ENCODE measurements at regions of chr17 and their contacts with region 1.

Region 1: GRCh38 chr17:32461853-32462617 is 17.7 kb downstream of the PSMD11 start:
- DNase-seq: peak; percentile 43
- H3K4me3 Mint-ChIP-seq: no peak overlapping the region
- H3K27ac Mint-ChIP-seq: no peak overlapping the region
- H3K4me1 Mint-ChIP-seq: peaks cover 20% of the 10 kb centered on the region
- H3K27me3 Mint-ChIP-seq: no peaks in the 10 kb centered on the region

Region 2: DNA sequence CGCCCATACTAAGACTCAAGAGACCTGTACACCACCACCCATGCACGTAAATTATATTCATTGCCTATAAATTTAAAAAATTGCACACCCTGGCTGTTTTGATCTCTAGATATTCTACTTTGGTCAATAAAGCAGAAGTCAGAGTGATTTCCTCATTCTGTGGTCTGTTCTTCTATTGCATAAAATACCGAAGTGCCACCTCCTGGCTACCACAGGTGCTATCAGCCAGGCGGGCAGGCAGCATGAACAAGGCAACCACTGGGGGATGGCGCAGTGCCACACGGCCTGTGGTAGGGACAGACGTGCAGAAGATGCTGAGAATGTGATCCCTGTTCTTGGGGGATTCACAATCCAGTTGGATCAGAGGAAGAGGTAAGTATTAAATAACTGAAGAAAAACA is 147.1 kb after region 1 on chr17:
- intact Hi-C with region 1: loop called (anchors 1 kb)
- DNase-seq: peak; percentile 51
- H3K4me3 Mint-ChIP-seq: no peak overlapping the region
- H3K27ac Mint-ChIP-seq: no peak overlapping the region
- H3K4me1 Mint-ChIP-seq: peaks cover 8% of the 10 kb centered on the region
- H3K27me3 Mint-ChIP-seq: peaks cover 1% of the 10 kb centered on the region

Region 3: DNA sequence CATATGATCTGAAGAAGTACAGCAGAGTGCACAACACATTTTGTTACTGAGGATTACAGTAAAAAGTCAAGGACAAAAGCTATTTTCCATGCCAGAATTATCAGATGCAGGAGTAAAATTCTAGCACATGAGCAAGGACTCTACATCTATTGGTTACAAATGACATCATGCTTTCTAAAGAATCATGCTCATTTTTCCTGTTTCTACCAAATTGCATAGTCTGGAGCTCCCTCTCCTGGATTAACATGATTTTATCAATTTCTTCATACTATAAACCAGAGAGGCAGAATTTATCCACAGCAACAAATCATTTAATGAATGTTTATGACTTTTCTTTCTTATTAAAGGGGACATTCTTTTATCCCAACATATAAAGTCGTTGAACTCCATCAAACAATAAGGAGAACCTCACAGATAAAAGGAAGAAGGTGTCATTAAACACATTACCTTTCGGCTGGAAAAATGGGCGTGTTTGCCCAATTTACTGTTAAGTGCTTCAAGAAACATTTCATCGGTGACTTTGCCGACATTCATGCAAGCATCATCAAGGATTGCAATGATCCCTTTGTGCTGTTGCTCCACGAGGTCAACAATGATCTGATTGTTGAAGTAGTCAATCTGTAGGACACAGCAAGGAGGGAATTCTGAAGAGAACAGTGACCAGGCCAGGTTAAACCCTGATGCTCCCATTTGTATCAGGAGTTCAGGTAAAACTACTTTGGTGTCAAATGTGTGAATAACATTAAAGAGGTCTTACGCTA is 293.2 kb after region 1 on chr17:
- intact Hi-C with region 1: loop called (anchors 1 kb)
- DNase-seq: no peak
- H3K4me3 Mint-ChIP-seq: no peak overlapping the region
- H3K27ac Mint-ChIP-seq: no peak overlapping the region
- H3K4me1 Mint-ChIP-seq: peaks cover 23% of the 10 kb centered on the region
- H3K27me3 Mint-ChIP-seq: no peaks in the 10 kb centered on the region

Region 4: DNA sequence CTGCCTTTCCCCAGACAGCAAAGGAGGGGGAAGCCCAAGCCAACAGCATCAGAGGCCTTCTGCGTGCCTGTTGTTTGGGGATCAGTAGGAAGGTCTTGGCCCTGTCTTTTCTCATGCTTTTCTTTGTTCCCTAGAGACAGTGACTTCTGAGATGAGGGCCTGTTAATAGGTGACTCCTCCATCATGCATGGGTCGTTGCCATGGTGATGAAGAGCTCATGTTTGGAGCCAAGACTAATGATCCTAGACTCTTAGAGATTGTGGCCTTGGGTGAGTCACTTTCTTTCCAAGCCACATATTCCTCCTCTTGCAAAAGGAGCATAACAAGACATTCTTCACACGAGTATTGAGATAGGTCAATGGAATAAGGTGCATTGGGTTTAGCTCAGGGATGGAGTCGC is 1032.1 kb after region 1 on chr17:
- intact Hi-C with region 1: no loop called
- DNase-seq: no peak
- H3K4me3 Mint-ChIP-seq: no peak overlapping the region
- H3K27ac Mint-ChIP-seq: no peak overlapping the region
- H3K4me1 Mint-ChIP-seq: no peaks in the 10 kb centered on the region
- H3K27me3 Mint-ChIP-seq: no peaks in the 10 kb centered on the region